WTC11 (cell line): ENCODE measurements at regions of chr11 and their contacts with region 1.

Region 1: DNA sequence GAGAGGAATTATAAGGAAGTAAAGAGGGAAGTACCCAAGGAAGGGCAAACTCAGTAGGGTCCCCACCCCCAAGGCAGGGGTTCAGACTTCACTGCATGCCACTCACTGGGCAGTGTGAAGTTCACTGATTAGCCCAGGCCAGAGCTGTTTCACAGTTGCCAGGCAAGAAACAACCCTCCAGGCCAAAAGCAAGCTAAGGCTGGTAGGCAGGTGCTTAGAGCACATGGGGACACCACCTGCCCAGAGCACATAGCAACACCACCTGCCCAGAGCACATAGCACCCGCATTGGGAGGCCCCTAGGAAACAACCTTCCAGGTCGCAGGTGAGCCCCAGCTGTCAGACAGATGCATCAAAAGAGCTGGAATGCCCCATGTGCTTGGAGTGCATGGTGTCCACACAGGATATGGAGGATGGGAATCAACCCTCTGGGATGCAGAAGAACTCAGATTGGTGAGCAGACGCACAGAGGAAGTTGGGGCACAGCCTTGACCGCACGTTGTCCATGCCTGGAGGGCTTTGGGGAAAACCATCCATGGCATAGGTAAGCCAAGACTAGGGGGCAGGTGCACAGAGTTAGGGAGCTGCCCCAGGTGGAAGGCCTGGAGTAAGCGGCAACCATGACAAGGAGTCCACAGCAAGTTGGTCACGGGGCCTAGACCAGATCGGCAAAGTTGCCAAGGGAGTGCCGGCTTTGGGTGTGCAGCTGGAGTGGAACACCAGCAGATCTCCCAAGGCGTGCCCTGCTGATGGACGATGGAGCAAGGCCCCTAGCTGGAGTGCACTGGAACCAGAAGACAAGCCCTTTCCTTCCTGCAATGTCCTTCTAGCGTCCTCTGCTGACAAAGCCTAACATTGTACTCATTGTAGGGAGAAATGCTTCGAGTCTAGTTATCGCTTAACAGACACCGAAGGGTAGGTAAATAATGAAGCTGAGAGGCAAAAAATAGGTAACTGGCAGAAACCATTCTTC is 7.8 kb upstream of the TMEM216 start:
- DNase-seq: peak; percentile 23
- ATAC-seq: peak; percentile 69
- H3K4me3 Mint-ChIP-seq: no peak overlapping the region
- H3K27ac Mint-ChIP-seq: no peak overlapping the region
- H3K4me1 Mint-ChIP-seq: peaks cover 5% of the 10 kb centered on the region; the same call in 1 of the 2 replicates
- H3K27me3 Mint-ChIP-seq: no peaks in the 10 kb centered on the region
- CTCF ChIP-seq: no peak

Region 2: GRCh38 chr11:61281581-61282250 is 102.8 kb before region 1 on chr11:
- CTCF ChIA-PET with region 1: interaction called, 14 read pairs
- POLR2A ChIA-PET with region 1: no interaction called
- DNase-seq: peak; percentile 91
- ATAC-seq: peak; percentile 96
- H3K4me3 Mint-ChIP-seq: peak overlapping the region; percentile 33; the same call in 1 of the 2 replicates
- H3K27ac Mint-ChIP-seq: no peak overlapping the region
- H3K4me1 Mint-ChIP-seq: peaks cover 31% of the 10 kb centered on the region
- H3K27me3 Mint-ChIP-seq: peaks cover 2% of the 10 kb centered on the region; the same call in 1 of the 2 replicates
- CTCF ChIP-seq: no peak

Region 3: GRCh38 chr11:61294717-61295595 is 89.6 kb before region 1 on chr11 and contains the start of gene VWCE:
- CTCF ChIA-PET with region 1: interaction called, 21 read pairs
- POLR2A ChIA-PET with region 1: no interaction called
- DNase-seq: peak; percentile 75
- ATAC-seq: peak; percentile 66
- H3K4me3 Mint-ChIP-seq: peak within 1 kb of the TSS; percentile 85
- H3K27ac Mint-ChIP-seq: no peak within 1 kb of the TSS
- H3K4me1 Mint-ChIP-seq: peaks cover 26% of the 10 kb centered on the region
- H3K27me3 Mint-ChIP-seq: peaks cover 17% of the 10 kb centered on the region
- CTCF ChIP-seq: no peak
- total RNA-seq, gene VWCE: 13.8 to 21.9 TPM (median 17.4 TPM) in 3 replicates

Region 4: DNA sequence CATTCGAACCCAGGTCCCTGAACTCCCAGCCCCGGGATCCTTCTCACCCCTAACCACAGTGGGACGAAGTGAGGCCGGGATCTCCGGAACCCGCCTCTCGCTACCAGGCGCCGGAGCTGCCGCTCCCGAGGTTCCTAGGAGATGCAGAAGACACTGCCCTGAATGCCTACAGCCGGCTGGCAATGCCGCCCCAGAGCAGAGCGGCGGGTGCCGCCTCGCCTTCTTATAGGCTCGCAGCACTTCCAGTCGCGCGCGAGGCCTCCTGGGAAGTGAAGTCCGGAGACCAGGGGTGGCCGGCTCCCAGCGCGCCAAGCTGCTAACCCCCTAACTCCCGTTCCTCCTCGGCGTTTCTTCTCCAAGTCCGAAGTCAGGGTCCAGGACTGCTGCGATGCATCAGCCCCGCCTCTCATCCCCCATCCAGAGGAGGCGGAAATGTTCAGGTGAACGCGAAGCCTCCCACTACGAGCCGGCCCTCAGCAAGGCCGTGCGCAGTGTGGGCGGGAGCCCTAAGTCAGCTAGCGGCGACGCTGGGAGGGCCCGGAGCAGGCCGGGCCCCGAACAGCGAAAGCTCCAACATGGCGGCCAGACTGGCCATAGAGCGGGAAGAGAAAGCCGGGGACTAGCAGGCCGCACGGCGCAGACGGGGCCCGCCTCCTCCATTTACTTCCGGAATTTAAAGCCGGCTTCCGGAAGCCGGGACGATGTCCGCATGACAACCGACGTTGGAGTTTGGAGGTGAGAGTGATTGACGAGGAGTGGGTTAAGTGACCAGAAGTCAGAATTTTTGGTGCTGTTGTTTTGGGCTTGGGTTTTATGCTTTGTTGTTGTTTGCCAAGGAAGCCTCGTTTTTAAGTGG is 22.6 kb before region 1 on chr11 and contains the starts of genes CYB561A3 and TMEM138:
- CTCF ChIA-PET with region 1: interaction called, 51 read pairs
- POLR2A ChIA-PET with region 1: interaction called, 4 read pairs
- DNase-seq: peak; percentile 92
- ATAC-seq: peak; percentile 93
- H3K4me3 Mint-ChIP-seq: peak within 1 kb of the TSS; percentile 96
- H3K27ac Mint-ChIP-seq: peak within 1 kb of the TSS; percentile 98
- H3K4me1 Mint-ChIP-seq: peaks cover 22% of the 10 kb centered on the region
- H3K27me3 Mint-ChIP-seq: no peaks in the 10 kb centered on the region
- CTCF ChIP-seq: no peak
- total RNA-seq, gene CYB561A3: 34.3 to 38.8 TPM (median 35.0 TPM) in 3 replicates
- total RNA-seq, gene TMEM138: 34.0 to 39.0 TPM (median 38.8 TPM) in 3 replicates

Region 5: DNA sequence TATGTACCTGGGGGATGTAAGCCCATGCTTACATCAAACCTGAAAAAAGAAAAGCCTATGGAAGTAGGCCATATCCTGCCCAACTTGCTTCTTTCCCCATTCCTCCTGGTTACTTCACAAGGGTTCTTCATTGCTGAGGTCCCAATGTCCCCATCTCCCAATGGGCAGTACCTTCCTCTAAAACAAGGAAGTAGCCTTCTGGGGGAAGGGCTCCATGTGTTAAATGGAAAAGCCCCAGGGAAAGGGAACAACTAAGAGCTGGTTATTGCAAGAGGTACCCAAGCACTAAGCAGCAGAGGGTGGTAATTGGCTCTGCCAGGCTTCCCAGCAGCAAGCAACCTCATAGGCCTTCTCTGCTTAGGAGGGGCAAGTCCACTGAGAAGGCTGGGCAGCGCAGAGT is 19.1 kb after region 1 on chr11:
- CTCF ChIA-PET with region 1: interaction called, 15 read pairs
- POLR2A ChIA-PET with region 1: no interaction called
- DNase-seq: no peak
- ATAC-seq: no peak
- H3K4me3 Mint-ChIP-seq: no peak overlapping the region
- H3K27ac Mint-ChIP-seq: no peak overlapping the region
- H3K4me1 Mint-ChIP-seq: no peaks in the 10 kb centered on the region
- H3K27me3 Mint-ChIP-seq: no peaks in the 10 kb centered on the region
- CTCF ChIP-seq: no peak